Natural killer cell (primary cell): ENCODE measurements at regions of chr1 and their contacts with region 1.

Region 1: DNA sequence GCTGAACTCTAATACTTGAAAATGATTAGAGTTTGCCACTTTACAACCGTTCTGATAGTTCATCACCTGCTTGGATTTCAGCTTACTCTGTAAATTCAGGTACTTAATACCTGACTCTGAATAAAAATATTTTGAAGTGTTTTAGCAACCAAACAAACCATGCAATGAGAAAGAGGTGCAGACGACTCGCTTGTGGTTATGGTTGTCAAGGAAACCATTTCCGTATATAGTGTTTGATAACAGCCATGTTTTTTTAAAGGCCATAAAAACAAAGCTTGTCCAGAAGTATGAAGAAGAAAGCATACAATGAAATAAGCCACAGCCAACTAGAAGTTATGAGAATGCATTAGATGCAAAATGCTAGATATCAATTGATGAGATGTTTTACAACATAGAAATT is 167.2 kb upstream of the HMCN1 start:
- DNase-seq: peak in 1 of 2 donors; percentile 94
- ATAC-seq: peak; percentile 81 to 89 (median 86)
- H3K4me3 ChIP-seq: no peak overlapping the region
- H3K4me3 Mint-ChIP-seq: peak overlapping the region; percentile 90
- H3K27ac ChIP-seq: peak overlapping the region; percentile 92
- H3K27ac Mint-ChIP-seq: peak overlapping the region; percentile 91 to 99
- H3K4me1 ChIP-seq: peaks cover 11% of the 10 kb centered on the region
- H3K4me1 Mint-ChIP-seq: peaks cover 41 to 51% of the 10 kb centered on the region in 2 donors
- H3K27me3 ChIP-seq: no peaks in the 10 kb centered on the region
- H3K27me3 Mint-ChIP-seq: no peaks in the 10 kb centered on the region
- CTCF ChIP-seq: no peak

Region 2: GRCh38 chr1:185213091-185213490 is 353.9 kb before region 1 on chr1:
- intact Hi-C with region 1: no loop called
- DNase-seq: no peak
- ATAC-seq: no peak
- H3K4me3 ChIP-seq: no peak overlapping the region
- H3K4me3 Mint-ChIP-seq: no peak overlapping the region
- H3K27ac ChIP-seq: no peak overlapping the region
- H3K27ac Mint-ChIP-seq: no peak overlapping the region
- H3K4me1 ChIP-seq: no peaks in the 10 kb centered on the region
- H3K4me1 Mint-ChIP-seq: no peaks in the 10 kb centered on the region
- H3K27me3 ChIP-seq: no peaks in the 10 kb centered on the region
- H3K27me3 Mint-ChIP-seq: no peaks in the 10 kb centered on the region
- CTCF ChIP-seq: no peak

Region 3: DNA sequence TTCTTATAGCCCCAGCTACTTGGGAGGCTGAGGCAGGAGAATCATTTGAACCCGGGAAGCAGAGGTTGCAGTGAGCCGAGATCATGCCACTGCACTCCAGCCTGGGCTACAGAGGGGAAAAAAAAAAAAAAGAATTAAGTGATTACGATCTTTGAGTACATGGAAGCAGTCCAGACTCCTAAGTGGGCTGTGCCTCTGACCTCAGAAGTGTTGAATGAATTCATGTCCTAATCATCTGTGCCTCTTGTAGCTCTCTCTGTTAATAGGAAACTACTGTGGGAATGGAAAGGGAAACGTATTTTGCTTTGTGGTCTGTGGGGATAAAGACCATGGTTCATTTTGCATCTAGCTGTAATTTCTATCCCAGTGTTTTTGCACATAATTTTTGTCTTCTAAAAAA is 241.6 kb before region 1 on chr1:
- intact Hi-C with region 1: no loop called
- DNase-seq: no peak
- ATAC-seq: no peak
- H3K4me3 ChIP-seq: no peak overlapping the region
- H3K4me3 Mint-ChIP-seq: no peak overlapping the region
- H3K27ac ChIP-seq: no peak overlapping the region
- H3K27ac Mint-ChIP-seq: no peak overlapping the region
- H3K4me1 ChIP-seq: no peaks in the 10 kb centered on the region
- H3K4me1 Mint-ChIP-seq: peaks cover 12 to 14% of the 10 kb centered on the region in 2 donors
- H3K27me3 ChIP-seq: no peaks in the 10 kb centered on the region
- H3K27me3 Mint-ChIP-seq: no peaks in the 10 kb centered on the region
- CTCF ChIP-seq: no peak

Region 4: GRCh38 chr1:185338719-185339622 is 228.0 kb before region 1 on chr1:
- intact Hi-C with region 1: loop called (anchors 5 kb)
- DNase-seq: peak; percentile 39 to 71
- ATAC-seq: peak; percentile 81 to 88 (median 84)
- H3K4me3 ChIP-seq: no peak overlapping the region
- H3K4me3 Mint-ChIP-seq: peak overlapping the region; percentile 76
- H3K27ac ChIP-seq: peak overlapping the region; percentile 63
- H3K27ac Mint-ChIP-seq: peak overlapping the region; percentile 83 to 84
- H3K4me1 ChIP-seq: peaks cover 25% of the 10 kb centered on the region
- H3K4me1 Mint-ChIP-seq: peaks cover 39 to 44% of the 10 kb centered on the region in 2 donors
- H3K27me3 ChIP-seq: no peaks in the 10 kb centered on the region
- H3K27me3 Mint-ChIP-seq: no peaks in the 10 kb centered on the region
- CTCF ChIP-seq: no peak

Region 5: GRCh38 chr1:185420588-185421081 is 146.4 kb before region 1 on chr1:
- intact Hi-C with region 1: loop called (anchors 1 kb)
- DNase-seq: peak; percentile 26 to 72
- ATAC-seq: peak; percentile 85 to 91 (median 91)
- H3K4me3 ChIP-seq: no peak overlapping the region
- H3K4me3 Mint-ChIP-seq: peak overlapping the region; percentile 81
- H3K27ac ChIP-seq: peak overlapping the region; percentile 78
- H3K27ac Mint-ChIP-seq: peak overlapping the region; percentile 84 to 98
- H3K4me1 ChIP-seq: peaks cover 31% of the 10 kb centered on the region
- H3K4me1 Mint-ChIP-seq: peaks cover 58 to 67% of the 10 kb centered on the region in 2 donors
- H3K27me3 ChIP-seq: no peaks in the 10 kb centered on the region
- H3K27me3 Mint-ChIP-seq: no peaks in the 10 kb centered on the region
- CTCF ChIP-seq: no peak

Region 6: DNA sequence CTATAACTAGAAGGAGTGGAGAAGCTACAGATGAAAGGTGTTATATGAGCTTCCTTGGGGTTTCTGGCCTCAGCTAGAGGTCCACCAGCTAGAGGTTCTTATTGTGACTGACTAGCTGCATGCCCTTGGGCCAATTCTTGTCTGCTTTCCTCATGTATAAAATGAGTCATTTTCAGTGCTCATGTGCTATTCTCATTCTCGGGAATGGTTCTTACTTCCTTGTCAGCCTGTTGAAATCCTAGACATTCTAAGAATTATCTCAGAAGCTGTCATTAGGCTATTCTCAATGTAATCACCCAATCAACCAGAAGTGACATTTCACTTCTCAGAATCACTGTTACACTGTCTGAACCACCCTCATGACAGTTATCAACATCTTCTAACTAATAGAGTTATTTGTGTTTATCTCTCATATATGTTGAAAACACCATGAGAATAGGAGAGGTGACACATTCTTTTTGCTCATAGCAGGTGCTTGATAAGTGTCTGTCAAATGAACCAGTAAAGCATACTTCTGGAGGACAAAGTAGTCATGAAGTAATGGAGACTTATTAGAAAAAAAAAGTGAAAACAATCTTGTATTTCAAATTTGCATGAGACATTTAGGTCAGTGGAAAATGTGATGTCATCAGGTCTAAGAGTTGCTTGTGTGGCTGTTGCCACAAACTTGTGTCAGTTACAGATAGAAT is 127.1 kb before region 1 on chr1:
- intact Hi-C with region 1: loop called (anchors 2 kb)
- DNase-seq: peak in 1 of 2 donors; percentile 73
- ATAC-seq: peak; percentile 75 to 83 (median 81)
- H3K4me3 ChIP-seq: no peak overlapping the region
- H3K4me3 Mint-ChIP-seq: no peak overlapping the region
- H3K27ac ChIP-seq: peak overlapping the region; percentile 87
- H3K27ac Mint-ChIP-seq: no peak overlapping the region
- H3K4me1 ChIP-seq: peaks cover 38% of the 10 kb centered on the region
- H3K4me1 Mint-ChIP-seq: peaks cover 7 to 9% of the 10 kb centered on the region in 2 donors
- H3K27me3 ChIP-seq: no peaks in the 10 kb centered on the region
- H3K27me3 Mint-ChIP-seq: no peaks in the 10 kb centered on the region
- CTCF ChIP-seq: no peak

Region 7: GRCh38 chr1:185690527-185690926 is 123.5 kb after region 1 on chr1:
- intact Hi-C with region 1: no loop called
- DNase-seq: no peak
- ATAC-seq: no peak
- H3K4me3 ChIP-seq: no peak overlapping the region
- H3K4me3 Mint-ChIP-seq: no peak overlapping the region
- H3K27ac ChIP-seq: no peak overlapping the region
- H3K27ac Mint-ChIP-seq: no peak overlapping the region
- H3K4me1 ChIP-seq: peaks cover 11% of the 10 kb centered on the region
- H3K4me1 Mint-ChIP-seq: peaks cover 12% of the 10 kb centered on the region in 2 donors
- H3K27me3 ChIP-seq: no peaks in the 10 kb centered on the region
- H3K27me3 Mint-ChIP-seq: peaks cover 31 to 65% of the 10 kb centered on the region in 2 donors
- CTCF ChIP-seq: no peak

Region 8: GRCh38 chr1:186102557-186103148 is 535.7 kb after region 1 on chr1:
- intact Hi-C with region 1: no loop called
- DNase-seq: no peak
- ATAC-seq: no peak
- H3K4me3 ChIP-seq: no peak overlapping the region
- H3K4me3 Mint-ChIP-seq: no peak overlapping the region
- H3K27ac ChIP-seq: no peak overlapping the region
- H3K27ac Mint-ChIP-seq: no peak overlapping the region
- H3K4me1 ChIP-seq: no peaks in the 10 kb centered on the region
- H3K4me1 Mint-ChIP-seq: no peaks in the 10 kb centered on the region
- H3K27me3 ChIP-seq: no peaks in the 10 kb centered on the region
- H3K27me3 Mint-ChIP-seq: no peaks in the 10 kb centered on the region
- CTCF ChIP-seq: no peak